ENCODE measurements at regions of chr19 and their contacts with region 1.

Region 1: GRCh38 chr19:10245189-10245939 is 6.7 kb upstream of the MRPL4 start:
- DNase-seq: no peak
- H3K4me3 ChIP-seq: no peak overlapping the region
- H3K27ac ChIP-seq: no peak overlapping the region
- H3K4me1 ChIP-seq: no peaks in the 10 kb centered on the region
- H3K27me3 ChIP-seq: no peaks in the 10 kb centered on the region
- CTCF ChIP-seq: no peak
- POLR2A ChIP-seq: no peak

Region 2: GRCh38 chr19:10230861-10231611 is 14.3 kb before region 1 on chr19 and contains the start of gene S1PR2:
- CTCF ChIA-PET with region 1: interaction called, 48 read pairs
- POLR2A ChIA-PET with region 1: no interaction called
- dilution Hi-C with region 1: no loop called
- intact Hi-C with region 1: loop called (anchors 1 kb)
- DNase-seq: peak; percentile 31
- H3K4me3 ChIP-seq: peak within 1 kb of the TSS; percentile 44 to 71 (median 68)
- H3K27ac ChIP-seq: no peak within 1 kb of the TSS
- H3K4me1 ChIP-seq: peaks cover 9% of the 10 kb centered on the region
- H3K27me3 ChIP-seq: no peaks in the 10 kb centered on the region
- CTCF ChIP-seq: no peak
- POLR2A ChIP-seq: no peak
- total RNA-seq, gene S1PR2: 1.0 and 1.3 TPM in 2 replicates

Region 3: DNA sequence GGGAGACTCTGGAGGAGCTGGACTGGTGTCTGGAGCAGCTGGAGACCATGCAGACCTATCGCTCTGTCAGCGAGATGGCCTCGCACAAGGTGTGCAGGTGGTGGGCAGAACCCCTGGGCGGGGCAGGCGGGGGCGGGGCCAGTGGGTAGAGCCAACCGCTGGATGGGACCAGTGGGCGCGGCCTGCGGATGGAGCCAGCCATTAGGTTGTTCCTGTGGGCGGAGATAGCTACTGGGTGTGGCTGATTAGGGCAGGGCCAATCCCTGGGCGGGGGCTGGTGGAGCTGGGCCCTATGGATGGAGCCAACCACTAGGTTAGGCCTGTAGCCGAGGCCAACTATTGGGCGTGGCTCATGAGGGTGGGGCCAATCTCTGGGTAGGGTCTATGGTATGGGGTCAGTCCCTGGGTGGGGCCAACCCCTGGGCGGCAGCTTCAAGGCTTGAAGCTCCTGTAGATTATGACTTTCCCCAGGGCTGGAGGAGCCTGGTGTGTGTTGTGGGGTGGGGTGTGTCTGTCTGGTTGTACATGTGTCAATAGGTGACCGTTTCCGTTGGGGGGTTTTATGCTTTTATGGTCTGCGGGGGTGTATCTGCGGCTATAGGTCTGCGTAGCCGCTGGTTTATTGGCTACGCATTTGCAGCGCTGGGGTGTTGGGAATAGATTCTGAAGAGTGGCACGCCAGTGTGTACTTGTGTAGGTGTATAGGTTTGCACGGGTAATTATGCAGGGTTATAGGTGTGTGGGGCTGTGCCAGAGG is 205.7 kb after region 1 on chr19:
- CTCF ChIA-PET with region 1: no interaction called
- POLR2A ChIA-PET with region 1: no interaction called
- dilution Hi-C with region 1: no loop called
- intact Hi-C with region 1: no loop called
- DNase-seq: no peak
- H3K4me3 ChIP-seq: no peak overlapping the region
- H3K27ac ChIP-seq: no peak overlapping the region
- H3K4me1 ChIP-seq: no peaks in the 10 kb centered on the region
- H3K27me3 ChIP-seq: no peaks in the 10 kb centered on the region
- CTCF ChIP-seq: no peak
- POLR2A ChIP-seq: no peak

Measured in endothelial cell of umbilical vein (primary cell).